Cardiac septum (tissue), 1 donor: ENCODE measurements at regions of chr19 and their contacts with region 1.

Region 1: DNA sequence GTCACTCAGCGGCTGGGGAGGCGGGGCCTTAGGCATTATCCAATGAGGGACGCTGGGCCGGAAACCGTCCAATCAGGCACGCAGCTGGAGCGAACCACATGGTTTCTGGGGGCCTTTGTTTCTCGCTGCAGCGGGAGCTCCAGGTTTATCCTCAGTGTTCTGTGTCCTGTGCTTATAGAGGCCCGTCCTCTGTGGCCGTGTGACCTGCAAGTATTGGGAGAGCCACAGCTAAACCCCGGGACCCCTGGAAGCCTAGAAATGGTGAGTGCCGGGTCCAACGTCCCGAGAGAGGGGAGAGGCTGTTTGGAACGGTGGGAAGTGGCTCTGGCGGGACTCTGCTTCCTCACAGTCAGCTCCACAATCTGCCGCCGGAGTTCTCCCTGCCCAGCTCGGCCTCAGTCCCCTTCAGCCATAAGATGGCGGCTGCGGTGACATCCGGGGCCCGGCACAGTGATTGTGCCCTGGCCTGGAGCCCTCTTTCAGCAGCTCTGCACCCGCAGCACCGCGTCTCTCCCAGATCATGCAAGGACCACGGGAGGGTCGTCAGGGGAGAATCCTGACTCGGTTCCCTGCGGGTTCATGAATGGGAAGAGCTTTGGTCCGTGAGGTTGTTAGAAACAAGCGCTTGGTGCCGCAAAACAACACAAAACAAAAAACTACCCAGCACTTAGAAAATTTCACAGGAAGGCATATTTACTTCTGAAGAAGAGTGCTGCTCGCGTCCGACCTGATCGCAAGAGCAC is at the start of gene ZNF253:
- DNase-seq: peak; percentile 97
- total RNA-seq, gene ZNF253: 8.9 TPM

Region 2: GRCh38 chr19:19821366-19821951 is 44.5 kb before region 1 on chr19 and contains the start of gene ZNF506:
- intact Hi-C with region 1: loop called (anchors 5 kb)
- DNase-seq: peak; percentile 98
- total RNA-seq, gene ZNF506: 18.2 TPM

Region 3: GRCh38 chr19:19900729-19901444 is 35.0 kb after region 1 on chr19 and contains the start of gene ZNF93:
- intact Hi-C with region 1: loop called (anchors 2 kb)
- DNase-seq: peak; percentile 95
- total RNA-seq, gene ZNF93: 0.83 TPM